ENCODE measurements at regions of chr4 and their contacts with region 1.

Region 1: GRCh38 chr4:56999751-57000150 is 21.1 kb downstream of the POLR2B start:
- DNase-seq: no peak
- H3K4me3 ChIP-seq: no peak overlapping the region
- H3K27ac ChIP-seq: no peak overlapping the region
- H3K4me1 ChIP-seq: peaks cover 0 to 8% (median 4%) of the 10 kb centered on the region in 4 donors
- H3K27me3 ChIP-seq: no peaks in the 10 kb centered on the region
- CTCF ChIP-seq: no peak

Region 2: GRCh38 chr4:56681158-56681852 is 318.4 kb before region 1 on chr4 and contains the start of gene HOPX:
- intact Hi-C with region 1: no loop called
- DNase-seq: no peak
- H3K4me3 ChIP-seq: no peak within 1 kb of the TSS
- H3K27ac ChIP-seq: no peak within 1 kb of the TSS
- H3K4me1 ChIP-seq: no peaks in the 10 kb centered on the region
- H3K27me3 ChIP-seq: peaks cover 0 to 9% of the 10 kb centered on the region in 2 donors
- CTCF ChIP-seq: no peak

Region 3: GRCh38 chr4:56937262-56937661 is 62.5 kb before region 1 on chr4:
- intact Hi-C with region 1: loop called (anchors 2 kb)
- DNase-seq: no peak
- H3K4me3 ChIP-seq: no peak overlapping the region
- H3K27ac ChIP-seq: no peak overlapping the region
- H3K4me1 ChIP-seq: peaks cover 0 to 11% (median 0%) of the 10 kb centered on the region in 4 donors
- H3K27me3 ChIP-seq: no peaks in the 10 kb centered on the region
- CTCF ChIP-seq: no peak